Heart right ventricle (tissue), 16 donors: ENCODE measurements at regions of chr2 and their contacts with region 1.

Region 1: GRCh38 chr2:99066075-99066958 is 75.2 kb upstream of the C2orf15 start:
- DNase-seq: no peak
- ATAC-seq: peak in 7 of 8 donors; percentile 33 to 74 (median 61)
- H3K4me3 ChIP-seq: peak overlapping the region in 1 of 10 donors; percentile 14
- H3K27ac ChIP-seq: peak overlapping the region in 3 of 10 donors; percentile 12 to 66 (median 13)
- H3K4me1 ChIP-seq: peaks cover 0 to 14% (median 0%) of the 10 kb centered on the region in 9 donors
- H3K27me3 ChIP-seq: no peaks in the 10 kb centered on the region
- CTCF ChIP-seq: peak in 8 of 9 donors; percentile 13 to 52 (median 40)

Region 2: DNA sequence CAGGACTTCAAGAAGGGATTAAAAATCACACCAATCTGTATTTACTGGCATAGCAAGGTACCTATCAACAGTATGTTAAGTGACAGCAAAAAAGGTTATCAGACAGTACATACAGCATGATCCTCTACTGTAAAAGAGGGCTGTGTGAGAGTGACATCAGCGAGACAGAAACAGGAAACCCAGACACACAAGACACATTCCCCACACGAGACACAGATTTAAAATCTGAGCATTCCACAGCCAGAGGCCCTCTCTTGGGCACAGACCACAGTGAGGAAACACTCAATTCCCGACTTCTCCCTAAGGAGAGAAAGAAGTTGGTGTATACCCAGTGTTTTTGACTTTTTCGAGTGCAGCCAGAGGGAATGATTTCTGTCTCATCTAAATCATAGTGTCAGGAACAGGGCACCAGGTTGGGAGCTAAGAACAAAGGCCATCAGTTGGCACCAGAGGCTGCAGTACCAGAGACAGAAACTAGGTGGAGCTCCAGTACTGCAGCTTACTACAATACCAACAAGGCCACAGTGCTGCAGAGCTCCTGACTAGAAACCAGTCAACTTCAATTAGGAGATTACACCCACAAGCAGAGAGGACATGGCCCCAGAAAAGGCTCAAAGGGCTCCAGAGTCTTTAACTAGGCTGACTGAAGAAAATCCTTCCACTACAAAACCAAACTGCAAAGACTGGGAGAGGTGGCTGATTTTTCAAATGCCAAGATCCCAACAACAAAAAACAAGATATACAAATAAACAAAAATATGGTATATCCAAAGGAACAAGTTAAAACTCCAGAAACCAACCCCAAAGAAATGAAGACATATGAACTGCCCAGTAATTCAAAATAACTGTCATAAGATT is 417.0 kb before region 1 on chr2:
- intact Hi-C with region 1: loop called in 8 of 10 experiments (anchors 5 to 10 kb)
- DNase-seq: peak; percentile 25 to 85
- ATAC-seq: peak; percentile 86 to 96 (median 92)
- H3K4me3 ChIP-seq: no peak overlapping the region
- H3K27ac ChIP-seq: peak overlapping the region in 1 of 10 donors; percentile 18
- H3K4me1 ChIP-seq: peaks cover 0 to 22% (median 0%) of the 10 kb centered on the region in 9 donors
- H3K27me3 ChIP-seq: no peaks in the 10 kb centered on the region
- CTCF ChIP-seq: peak; percentile 97 to 99 (median 99)

Region 3: GRCh38 chr2:98654699-98655495 is 411.4 kb before region 1 on chr2:
- intact Hi-C with region 1: loop called in 1 of 10 experiments (anchors 10 kb)
- DNase-seq: no peak
- ATAC-seq: no peak
- H3K4me3 ChIP-seq: no peak overlapping the region
- H3K27ac ChIP-seq: peak overlapping the region in 1 of 10 donors; percentile 32
- H3K4me1 ChIP-seq: peaks cover 0 to 40% (median 0%) of the 10 kb centered on the region in 9 donors
- H3K27me3 ChIP-seq: no peaks in the 10 kb centered on the region
- CTCF ChIP-seq: no peak

Region 4: DNA sequence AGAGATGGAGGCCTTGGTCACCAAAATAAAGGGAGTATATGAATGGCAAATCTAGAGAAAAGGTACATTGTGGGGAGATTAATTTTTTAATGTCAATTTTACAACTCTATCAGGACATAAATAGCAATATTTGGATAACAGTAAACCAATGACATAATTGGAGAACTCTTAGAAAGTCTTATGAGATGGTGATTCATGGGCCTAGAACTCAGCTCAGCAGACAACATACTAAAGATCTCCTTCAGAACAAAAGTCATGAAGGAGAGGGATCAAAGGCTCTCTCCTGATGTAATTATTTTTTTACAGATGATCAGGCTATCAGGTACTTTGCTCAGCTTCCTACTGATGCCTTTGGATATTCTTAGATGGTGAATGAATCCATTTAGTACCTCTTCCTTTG is 220.3 kb before region 1 on chr2:
- intact Hi-C with region 1: loop called in 2 of 10 experiments (anchors 10 kb)
- DNase-seq: no peak
- ATAC-seq: no peak
- H3K4me3 ChIP-seq: no peak overlapping the region
- H3K27ac ChIP-seq: no peak overlapping the region
- H3K4me1 ChIP-seq: no peaks in the 10 kb centered on the region
- H3K27me3 ChIP-seq: peaks cover 0 to 11% (median 2%) of the 10 kb centered on the region in 7 donors
- CTCF ChIP-seq: no peak

Region 5: DNA sequence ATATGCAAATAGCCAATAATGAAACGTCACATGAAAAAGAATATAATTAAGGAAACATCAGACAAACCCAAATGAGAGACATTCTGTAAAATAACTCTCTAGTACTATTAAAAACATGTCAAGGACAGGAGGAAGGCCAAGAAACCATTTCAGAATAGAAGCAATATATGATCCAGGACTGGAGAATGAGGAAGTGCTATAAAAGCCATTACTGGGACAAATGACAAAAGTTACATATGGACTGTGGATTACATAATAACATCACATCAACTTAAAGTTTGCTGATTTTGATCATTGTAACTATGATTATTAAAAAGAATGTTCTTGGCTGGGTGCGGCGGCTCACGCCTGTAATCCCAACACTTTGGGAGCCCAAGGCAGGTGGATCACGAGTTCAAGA is 211.6 kb before region 1 on chr2:
- intact Hi-C with region 1: loop called in 2 of 10 experiments (anchors 10 kb)
- DNase-seq: no peak
- ATAC-seq: no peak
- H3K4me3 ChIP-seq: no peak overlapping the region
- H3K27ac ChIP-seq: no peak overlapping the region
- H3K4me1 ChIP-seq: no peaks in the 10 kb centered on the region
- H3K27me3 ChIP-seq: peaks cover 0 to 17% (median 5%) of the 10 kb centered on the region in 7 donors
- CTCF ChIP-seq: no peak